ENCODE measurements at regions of chr15 and their contacts with region 1.

Region 1: GRCh38 chr15:28123408-28124023 is 24.4 kb upstream of the OCA2 start:
- DNase-seq: peak; percentile 65 to 71 (median 68)
- ATAC-seq: peak; percentile 95
- H3K4me3 ChIP-seq: no peak overlapping the region
- H3K27ac ChIP-seq: no peak overlapping the region
- H3K4me1 ChIP-seq: peaks cover 0 to 3% of the 10 kb centered on the region in 2 experiments; a peak in 1 of 5 replicates
- H3K27me3 ChIP-seq: no peaks in the 10 kb centered on the region
- CTCF ChIP-seq: peak; percentile 75 to 81 (median 77)
- EP300 ChIP-seq: no peak
- POLR2A ChIP-seq: no peak
- RAD21 ChIP-seq: peak in 1 of 2 experiments; percentile 58; a peak in 2 of 4 replicates

Region 2: GRCh38 chr15:28021281-28022039 is 102.1 kb before region 1 on chr15:
- CTCF ChIA-PET with region 1: interaction called, 5 read pairs
- POLR2A ChIA-PET with region 1: no interaction called
- in situ Hi-C with region 1: no loop called
- intact Hi-C with region 1: loop called (anchors 1 kb)
- DNase-seq: peak; percentile 41 to 42 (median 42)
- ATAC-seq: peak; percentile 58
- H3K4me3 ChIP-seq: no peak overlapping the region
- H3K27ac ChIP-seq: no peak overlapping the region
- H3K4me1 ChIP-seq: peaks cover 0 to 3% of the 10 kb centered on the region in 2 experiments; a peak in 1 of 5 replicates
- H3K27me3 ChIP-seq: peaks cover 11 to 67% of the 10 kb centered on the region in 2 experiments; a peak in 4 of 5 replicates
- CTCF ChIP-seq: peak; percentile 46 to 63 (median 55)
- EP300 ChIP-seq: no peak
- POLR2A ChIP-seq: no peak
- RAD21 ChIP-seq: peak in 1 of 2 experiments; percentile 44; a peak in 3 of 4 replicates

Region 3: DNA sequence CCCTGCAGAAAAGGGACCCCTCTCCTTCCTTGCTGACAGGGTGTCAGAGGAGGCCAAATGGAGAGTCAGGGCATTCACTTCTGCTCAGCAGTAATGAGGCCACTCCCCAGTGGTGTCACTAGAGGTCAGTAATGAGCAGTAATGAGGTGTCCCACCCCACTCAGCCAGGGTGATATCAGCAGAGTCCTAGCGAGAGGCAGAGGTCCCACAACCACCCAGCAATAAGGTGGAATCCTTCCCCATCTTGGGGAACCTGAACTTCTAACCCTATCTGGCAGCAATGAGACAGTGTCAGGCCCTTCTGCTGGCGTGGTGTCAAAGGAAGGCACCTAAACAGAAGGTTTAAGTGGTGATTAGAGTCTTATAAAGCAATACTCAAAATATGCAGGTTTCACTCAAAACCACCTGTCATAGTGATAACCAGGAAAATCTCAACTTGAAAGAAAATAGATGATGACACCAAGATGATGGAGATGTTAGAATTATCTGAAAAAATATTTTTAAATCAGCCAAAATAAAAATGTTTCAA is 37.3 kb before region 1 on chr15:
- CTCF ChIA-PET with region 1: no interaction called
- POLR2A ChIA-PET with region 1: no interaction called
- in situ Hi-C with region 1: no loop called
- intact Hi-C with region 1: loop called (anchors 1 kb)
- DNase-seq: peak; percentile 60 to 76 (median 68)
- ATAC-seq: peak; percentile 100
- H3K4me3 ChIP-seq: no peak overlapping the region
- H3K27ac ChIP-seq: no peak overlapping the region
- H3K4me1 ChIP-seq: no peaks in the 10 kb centered on the region
- H3K27me3 ChIP-seq: no peaks in the 10 kb centered on the region; a peak in 1 of 5 replicates
- CTCF ChIP-seq: peak; percentile 78 to 88 (median 83)
- EP300 ChIP-seq: no peak
- POLR2A ChIP-seq: no peak
- RAD21 ChIP-seq: peak; percentile 27 to 70; a peak in 3 of 4 replicates